ENCODE measurements at regions of chr21 and their contacts with region 1.

Region 1: DNA sequence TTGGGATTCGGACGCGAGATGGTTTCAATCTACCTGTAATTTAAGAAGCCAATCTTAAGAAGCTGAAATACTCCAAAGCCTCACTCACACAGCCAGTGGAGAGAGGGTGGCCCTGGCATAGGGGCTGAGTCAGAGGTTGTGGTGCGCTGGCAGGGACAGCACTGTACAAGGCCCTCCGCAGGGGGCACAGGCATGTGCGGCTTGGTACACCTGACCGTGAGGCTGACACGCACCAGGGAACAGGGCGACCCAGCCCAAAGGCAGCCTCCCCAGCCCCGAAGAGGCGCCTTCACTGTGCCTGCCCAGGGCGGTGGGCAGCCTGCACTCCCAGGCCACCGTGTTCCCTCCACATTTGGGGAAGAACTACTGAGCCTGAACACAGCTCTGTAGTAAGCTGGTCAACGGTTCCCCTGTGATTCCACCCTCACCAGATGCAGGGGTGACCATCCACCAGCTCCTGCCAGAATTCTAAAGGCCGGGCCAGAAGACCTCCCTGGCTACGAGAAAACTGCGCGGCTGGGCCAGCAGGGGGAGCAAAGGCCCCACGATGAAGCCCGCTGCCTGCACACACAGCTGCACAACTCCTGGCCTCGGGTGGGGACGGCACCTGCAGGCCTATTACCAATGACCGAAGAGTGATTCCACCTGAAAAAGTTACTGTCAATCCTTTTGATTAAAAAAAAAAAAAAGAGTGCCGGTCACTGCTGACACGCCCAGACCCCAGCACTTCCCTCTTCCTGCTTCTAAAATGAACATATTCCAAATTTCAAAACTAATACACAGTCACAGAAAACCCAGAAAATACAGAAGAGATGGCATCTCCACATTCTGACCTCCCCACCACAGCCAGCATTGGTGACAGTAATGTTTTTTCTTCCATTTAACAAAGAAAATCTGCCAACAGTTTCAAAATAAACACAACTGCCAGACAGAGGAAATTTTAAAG is 49.6 kb upstream of the RIPK4 start:
- DNase-seq: peak; percentile 78
- ATAC-seq: peak; percentile 88
- H3K4me3 Mint-ChIP-seq: no peak overlapping the region
- H3K27ac Mint-ChIP-seq: no peak overlapping the region
- H3K4me1 Mint-ChIP-seq: peaks cover 6% of the 10 kb centered on the region
- H3K27me3 Mint-ChIP-seq: no peaks in the 10 kb centered on the region

Region 2: GRCh38 chr21:41706678-41707077 is 109.8 kb before region 1 on chr21:
- CTCF ChIA-PET with region 1: no interaction called
- POLR2A ChIA-PET with region 1: no interaction called
- intact Hi-C with region 1: no loop called
- DNase-seq: peak; percentile 58
- ATAC-seq: peak; percentile 60
- H3K4me3 Mint-ChIP-seq: no peak overlapping the region
- H3K27ac Mint-ChIP-seq: no peak overlapping the region
- H3K4me1 Mint-ChIP-seq: peaks cover 9% of the 10 kb centered on the region
- H3K27me3 Mint-ChIP-seq: peaks cover 8% of the 10 kb centered on the region

Region 3: GRCh38 chr21:41726945-41727783 is 89.3 kb before region 1 on chr21:
- CTCF ChIA-PET with region 1: no interaction called
- POLR2A ChIA-PET with region 1: no interaction called
- intact Hi-C with region 1: no loop called
- DNase-seq: no peak
- ATAC-seq: no peak
- H3K4me3 Mint-ChIP-seq: no peak overlapping the region
- H3K27ac Mint-ChIP-seq: no peak overlapping the region
- H3K4me1 Mint-ChIP-seq: peaks cover 4% of the 10 kb centered on the region
- H3K27me3 Mint-ChIP-seq: peaks cover 51% of the 10 kb centered on the region

Region 4: GRCh38 chr21:41899426-41900202 is 83.1 kb after region 1 on chr21:
- CTCF ChIA-PET with region 1: no interaction called
- POLR2A ChIA-PET with region 1: no interaction called
- intact Hi-C with region 1: no loop called
- DNase-seq: peak; percentile 83
- ATAC-seq: peak; percentile 83
- H3K4me3 Mint-ChIP-seq: peak overlapping the region; percentile 26
- H3K27ac Mint-ChIP-seq: peak overlapping the region; percentile 84
- H3K4me1 Mint-ChIP-seq: peaks cover 40% of the 10 kb centered on the region
- H3K27me3 Mint-ChIP-seq: no peaks in the 10 kb centered on the region

Region 5: DNA sequence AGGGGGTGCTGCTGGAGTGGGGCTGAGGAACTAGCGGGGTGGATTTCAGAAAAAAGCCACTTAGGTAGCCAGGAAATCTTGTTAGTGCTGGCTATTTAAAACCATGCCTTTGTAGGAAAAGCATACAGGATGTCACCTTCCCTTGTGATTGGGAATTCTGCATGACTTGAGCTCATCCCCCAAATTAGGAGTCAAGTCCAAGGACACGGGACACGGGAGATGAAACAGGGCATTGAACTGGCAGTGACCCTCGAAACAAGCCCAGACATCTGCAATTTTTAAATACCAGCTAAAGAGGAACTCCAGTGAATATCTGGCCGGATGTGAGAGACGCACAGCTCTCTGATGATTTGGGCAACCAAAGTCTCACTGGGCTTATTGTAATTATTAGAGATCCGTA is 104.5 kb after region 1 on chr21:
- CTCF ChIA-PET with region 1: interaction called, 10 read pairs
- POLR2A ChIA-PET with region 1: no interaction called
- intact Hi-C with region 1: no loop called
- DNase-seq: no peak
- ATAC-seq: no peak
- H3K4me3 Mint-ChIP-seq: no peak overlapping the region
- H3K27ac Mint-ChIP-seq: no peak overlapping the region
- H3K4me1 Mint-ChIP-seq: peaks cover 40% of the 10 kb centered on the region
- H3K27me3 Mint-ChIP-seq: no peaks in the 10 kb centered on the region

Region 6: GRCh38 chr21:42117229-42117966 is 300.9 kb after region 1 on chr21:
- CTCF ChIA-PET with region 1: interaction called, 21 read pairs
- POLR2A ChIA-PET with region 1: no interaction called
- intact Hi-C with region 1: loop called (anchors 1 kb)
- DNase-seq: peak; percentile 86
- ATAC-seq: peak; percentile 88
- H3K4me3 Mint-ChIP-seq: no peak overlapping the region
- H3K27ac Mint-ChIP-seq: no peak overlapping the region
- H3K4me1 Mint-ChIP-seq: peaks cover 10% of the 10 kb centered on the region
- H3K27me3 Mint-ChIP-seq: peaks cover 43% of the 10 kb centered on the region

Measured in activated CD4-positive, alpha-beta T cell treated with anti-CD3 and anti-CD28 coated beads for 36 hours (primary cell).